WTC11 (cell line): ENCODE measurements at regions of chr19 and their contacts with region 1.

Region 1: GRCh38 chr19:18419195-18419698 is at the start of gene SSBP4:
- DNase-seq: peak; percentile 69
- ATAC-seq: peak; percentile 5; the same call in 1 of the 2 replicates
- H3K4me3 Mint-ChIP-seq: peak within 1 kb of the TSS; percentile 72
- H3K27ac Mint-ChIP-seq: no peak within 1 kb of the TSS
- H3K4me1 Mint-ChIP-seq: peaks cover 30% of the 10 kb centered on the region
- H3K27me3 Mint-ChIP-seq: peaks cover 32% of the 10 kb centered on the region
- CTCF ChIP-seq: no peak
- total RNA-seq, gene SSBP4: 44.5 to 51.2 TPM (median 47.4 TPM) in 3 replicates

Region 2: DNA sequence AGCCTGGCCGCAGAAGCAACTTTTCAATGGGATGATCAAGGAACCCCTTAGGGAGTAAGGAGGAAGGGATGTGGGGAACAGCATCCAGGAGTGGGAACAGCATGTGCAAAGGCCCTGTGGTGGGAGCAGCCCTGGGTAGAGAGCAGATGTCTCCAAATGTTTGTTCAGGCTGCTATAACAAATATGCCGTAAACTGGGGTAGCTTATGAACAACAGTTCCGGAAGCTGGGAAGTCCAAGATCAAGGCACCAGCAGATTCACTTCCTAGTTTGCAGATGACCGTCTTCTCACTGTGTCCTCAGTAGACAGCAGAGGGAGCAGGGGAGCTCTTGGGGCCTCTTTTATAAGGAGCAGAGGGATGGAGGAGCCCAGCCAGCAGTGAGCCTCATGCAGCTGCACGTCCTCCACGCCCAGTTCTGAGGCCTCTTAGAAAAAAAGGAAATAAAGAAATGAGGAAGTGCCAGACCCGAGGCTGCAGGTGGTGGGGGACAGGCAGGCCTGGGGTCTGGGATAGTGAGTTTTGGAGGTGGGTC is 17.6 kb before region 1 on chr19:
- CTCF ChIA-PET with region 1: interaction called, 73 read pairs
- POLR2A ChIA-PET with region 1: interaction called, 3 read pairs
- DNase-seq: no peak
- ATAC-seq: peak; percentile 87
- H3K4me3 Mint-ChIP-seq: no peak overlapping the region
- H3K27ac Mint-ChIP-seq: no peak overlapping the region
- H3K4me1 Mint-ChIP-seq: peaks cover 8% of the 10 kb centered on the region
- H3K27me3 Mint-ChIP-seq: peaks cover 3% of the 10 kb centered on the region; the same call in 1 of the 2 replicates
- CTCF ChIP-seq: no peak

Region 3: DNA sequence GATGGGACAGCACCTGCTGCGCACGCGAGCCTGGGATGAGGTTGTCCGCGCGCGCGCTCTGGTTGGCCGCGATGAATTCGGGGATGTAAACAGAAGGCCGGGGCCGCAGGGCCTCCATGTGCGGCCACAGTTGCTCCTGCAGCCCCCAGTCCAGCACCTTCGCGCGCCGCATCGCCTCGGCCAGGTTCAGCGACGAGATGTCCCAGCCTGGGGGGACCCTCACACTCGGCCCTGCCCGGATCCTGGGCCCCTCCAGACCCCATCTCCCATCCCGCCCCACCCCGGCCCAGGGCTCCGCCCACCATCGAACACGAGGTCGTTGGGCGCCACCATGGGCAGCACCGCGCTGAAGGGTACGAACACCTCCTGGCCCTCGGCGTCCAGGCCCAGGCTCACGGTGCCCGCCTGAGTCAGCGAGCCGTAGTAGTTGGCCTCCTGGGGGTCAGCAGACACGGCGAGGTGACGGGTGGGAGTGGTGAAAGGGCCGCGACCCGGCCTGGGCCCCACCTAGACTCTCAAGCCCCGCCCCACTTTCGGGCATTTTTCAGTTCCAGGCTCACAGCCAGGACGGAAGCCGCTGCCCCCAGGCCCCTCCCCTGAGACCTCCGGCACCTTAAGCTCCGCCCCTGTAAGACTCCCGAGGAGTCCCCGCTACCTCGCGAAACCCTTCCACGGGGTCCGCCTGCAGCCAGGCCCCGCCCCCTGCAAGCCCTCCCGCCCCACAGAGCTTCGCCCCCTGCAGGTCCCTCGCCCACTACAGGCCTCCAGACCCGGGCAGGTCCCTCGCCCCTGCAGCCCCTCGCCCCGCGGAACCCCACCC is 17.6 kb after region 1 on chr19:
- CTCF ChIA-PET with region 1: interaction called, 15 read pairs
- POLR2A ChIA-PET with region 1: interaction called, 12 read pairs
- DNase-seq: peak; percentile 92
- ATAC-seq: peak; percentile 64
- H3K4me3 Mint-ChIP-seq: peak overlapping the region; percentile 66
- H3K27ac Mint-ChIP-seq: peak overlapping the region; percentile 63; the same call in 1 of the 2 replicates
- H3K4me1 Mint-ChIP-seq: peaks cover 34% of the 10 kb centered on the region
- H3K27me3 Mint-ChIP-seq: no peaks in the 10 kb centered on the region
- CTCF ChIP-seq: no peak